PC-3 (cell line): ENCODE measurements at regions of chr3 and their contacts with region 1.

Region 1: GRCh38 chr3:8441969-8442559 is 59.6 kb upstream of the LMCD1 start:
- DNase-seq: peak; percentile 84
- ATAC-seq: peak; percentile 1; the same call in 1 of the 2 replicates
- H3K4me3 ChIP-seq: no peak overlapping the region
- H3K27ac ChIP-seq: no peak overlapping the region
- H3K4me1 ChIP-seq: peaks cover 46% of the 10 kb centered on the region
- H3K27me3 ChIP-seq: no peaks in the 10 kb centered on the region
- CTCF ChIP-seq: peak; percentile 90

Region 2: DNA sequence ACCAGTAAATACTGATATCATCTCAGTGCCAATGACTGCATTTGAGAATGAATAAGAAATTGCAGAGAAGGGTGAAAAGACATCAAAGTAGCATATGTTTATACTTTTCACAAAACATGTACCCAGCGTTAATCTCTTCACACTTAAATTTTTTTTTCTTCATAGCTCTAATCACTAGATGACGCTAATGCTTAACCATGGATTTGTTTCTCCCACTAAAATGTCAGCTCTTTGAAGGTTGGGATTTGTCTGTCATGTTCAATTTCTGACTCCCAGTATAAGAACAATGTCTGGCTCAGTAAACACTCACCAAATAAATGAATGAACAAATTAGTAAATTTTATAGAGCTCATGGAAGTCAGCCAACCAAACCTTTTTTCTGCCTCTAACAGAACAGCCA is 18.8 kb before region 1 on chr3:
- CTCF ChIA-PET with region 1: no interaction called
- POLR2A ChIA-PET with region 1: no interaction called
- intact Hi-C with region 1: no loop called
- DNase-seq: no peak
- ATAC-seq: no peak; the same call in 1 of the 2 replicates
- H3K4me3 ChIP-seq: no peak overlapping the region
- H3K27ac ChIP-seq: no peak overlapping the region
- H3K4me1 ChIP-seq: no peaks in the 10 kb centered on the region
- H3K27me3 ChIP-seq: no peaks in the 10 kb centered on the region
- CTCF ChIP-seq: no peak; the same call in 1 of the 2 replicates

Region 3: DNA sequence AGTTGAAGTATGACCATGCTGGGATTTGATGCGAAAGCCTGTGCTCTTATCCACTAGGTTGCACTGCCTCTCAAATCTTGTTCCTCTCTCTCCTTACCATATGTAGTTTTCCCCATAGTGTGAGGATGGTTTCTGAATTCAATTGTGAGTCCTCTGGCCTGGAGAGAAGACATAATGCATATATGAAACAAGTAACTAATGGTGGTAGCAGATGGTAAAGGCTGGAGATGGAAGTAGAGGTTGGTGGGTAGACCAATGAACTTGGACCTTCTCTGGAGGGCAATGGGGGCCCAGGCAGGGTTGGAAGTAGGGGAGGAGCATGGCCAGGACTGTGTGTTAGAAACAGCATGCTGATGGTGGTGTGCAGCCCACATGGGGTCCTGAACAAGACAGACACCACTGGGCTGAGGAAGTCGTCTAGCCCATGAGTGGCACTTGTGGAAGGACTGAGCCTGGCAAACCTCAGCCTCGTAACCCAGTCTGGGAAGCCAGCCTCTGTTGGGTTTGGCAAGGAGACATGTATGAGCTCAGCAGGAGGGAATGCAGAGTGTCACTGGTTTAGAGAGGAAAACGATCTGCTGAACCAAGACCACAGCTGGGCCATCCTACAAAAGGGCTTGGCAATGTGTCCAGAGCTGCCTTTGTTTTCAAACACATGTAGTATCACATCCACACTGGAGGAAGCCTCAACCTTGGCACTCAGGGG is 41.0 kb after region 1 on chr3:
- CTCF ChIA-PET with region 1: interaction called, 3 read pairs
- POLR2A ChIA-PET with region 1: interaction called, 5 read pairs
- intact Hi-C with region 1: loop called (anchors 1 kb)
- DNase-seq: peak; percentile 97
- ATAC-seq: peak; percentile 99
- H3K4me3 ChIP-seq: no peak overlapping the region
- H3K27ac ChIP-seq: 0 out of 2 replicates have a peak overlapping the region, but pooled peaks have one; percentile 4
- H3K4me1 ChIP-seq: peaks cover 13% of the 10 kb centered on the region
- H3K27me3 ChIP-seq: no peaks in the 10 kb centered on the region
- CTCF ChIP-seq: no peak

Region 4: DNA sequence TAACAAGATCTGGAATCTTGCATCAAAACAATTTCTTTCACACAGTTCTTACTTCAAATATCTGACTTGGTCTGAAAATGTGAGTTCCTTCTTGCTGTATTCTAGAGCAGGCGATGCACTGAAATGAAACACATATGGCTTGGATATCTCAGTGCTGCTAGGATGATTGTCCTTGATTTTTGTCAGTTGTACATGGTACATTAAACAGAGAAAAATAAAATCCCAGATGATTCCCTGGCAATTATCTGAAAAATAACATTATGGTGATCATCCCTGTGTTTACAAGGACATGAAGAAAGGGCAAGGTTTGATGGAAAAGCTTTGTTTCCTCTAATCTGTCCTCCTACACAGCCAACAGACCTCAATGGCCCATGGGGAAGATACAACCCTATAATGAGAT is 70.2 kb after region 1 on chr3:
- CTCF ChIA-PET with region 1: no interaction called
- POLR2A ChIA-PET with region 1: no interaction called
- intact Hi-C with region 1: no loop called
- DNase-seq: no peak
- ATAC-seq: no peak
- H3K4me3 ChIP-seq: no peak overlapping the region
- H3K27ac ChIP-seq: no peak overlapping the region
- H3K4me1 ChIP-seq: peaks cover 18% of the 10 kb centered on the region
- H3K27me3 ChIP-seq: no peaks in the 10 kb centered on the region
- CTCF ChIP-seq: no peak

Region 5: DNA sequence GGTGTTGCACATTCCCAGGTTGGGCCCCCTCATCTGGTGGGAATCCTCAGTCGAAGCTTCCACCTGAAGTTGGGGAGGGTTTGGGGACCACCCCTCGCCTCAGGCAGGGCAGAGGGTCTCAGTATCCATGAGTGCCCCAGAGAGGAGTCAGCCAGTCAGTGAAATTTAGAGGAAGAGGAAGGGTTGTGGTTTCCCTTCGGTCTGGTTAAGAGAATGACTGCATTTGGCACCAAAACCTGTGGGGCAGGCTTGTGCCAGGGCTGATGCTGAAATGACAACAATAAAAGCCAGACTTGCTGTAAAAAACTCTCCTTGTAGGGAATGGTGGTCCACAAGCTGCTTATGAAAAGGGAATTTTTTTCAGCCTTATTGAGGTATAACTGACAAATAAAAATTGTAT is 82.2 kb after region 1 on chr3:
- CTCF ChIA-PET with region 1: interaction called, 11 read pairs
- POLR2A ChIA-PET with region 1: no interaction called
- intact Hi-C with region 1: no loop called
- DNase-seq: peak; percentile 86
- ATAC-seq: peak; percentile 70
- H3K4me3 ChIP-seq: peak overlapping the region; percentile 46
- H3K27ac ChIP-seq: peak overlapping the region; percentile 90
- H3K4me1 ChIP-seq: peaks cover 42% of the 10 kb centered on the region
- H3K27me3 ChIP-seq: no peaks in the 10 kb centered on the region
- CTCF ChIP-seq: no peak

Region 6: GRCh38 chr3:8607234-8608040 is 165.4 kb after region 1 on chr3:
- CTCF ChIA-PET with region 1: interaction called, 11 read pairs
- POLR2A ChIA-PET with region 1: no interaction called
- intact Hi-C with region 1: loop called (anchors 1 kb)
- DNase-seq: peak; percentile 74
- ATAC-seq: peak; percentile 95
- H3K4me3 ChIP-seq: no peak overlapping the region
- H3K27ac ChIP-seq: no peak overlapping the region
- H3K4me1 ChIP-seq: 0 out of 2 replicates have a peak, but pooled peaks cover 6% of the 10 kb centered on the region
- H3K27me3 ChIP-seq: no peaks in the 10 kb centered on the region
- CTCF ChIP-seq: peak; percentile 80

Region 7: DNA sequence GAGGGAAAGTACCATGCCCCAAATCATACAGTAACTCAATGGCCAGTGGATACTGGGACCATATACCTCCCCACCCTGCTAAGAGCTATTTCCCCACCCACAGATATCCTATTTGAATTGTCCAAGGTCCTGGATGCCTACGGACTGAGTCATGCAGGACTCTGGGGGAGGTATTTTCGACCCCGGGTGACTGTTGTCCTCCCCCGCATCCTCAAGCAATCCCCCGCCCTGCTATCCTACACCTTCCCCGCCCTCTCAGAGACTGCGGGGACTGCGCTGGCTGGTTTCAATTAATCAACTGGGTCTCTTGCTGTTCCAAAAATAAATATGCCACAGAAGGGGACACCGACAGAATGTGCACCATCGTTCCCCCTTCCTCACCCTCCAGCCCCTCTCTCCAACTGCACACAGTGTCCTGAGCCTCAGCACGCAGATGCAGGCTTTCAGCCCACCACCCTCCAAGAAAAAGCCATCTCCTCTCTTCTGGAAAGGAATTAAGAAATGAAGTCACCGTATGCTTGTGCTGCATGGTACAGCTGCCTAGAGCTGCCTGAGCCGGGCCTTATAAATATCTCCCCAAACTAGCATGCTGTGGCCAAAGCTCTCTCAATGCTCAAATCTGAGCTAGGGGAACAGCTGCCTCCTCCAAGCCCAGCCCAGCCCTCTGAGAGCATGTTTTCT is 299.7 kb after region 1 on chr3:
- CTCF ChIA-PET with region 1: no interaction called
- POLR2A ChIA-PET with region 1: no interaction called
- intact Hi-C with region 1: loop called (anchors 1 kb)
- DNase-seq: peak; percentile 98
- ATAC-seq: peak; percentile 76
- H3K4me3 ChIP-seq: peak overlapping the region; percentile 45
- H3K27ac ChIP-seq: peak overlapping the region; percentile 91
- H3K4me1 ChIP-seq: peaks cover 51% of the 10 kb centered on the region
- H3K27me3 ChIP-seq: no peaks in the 10 kb centered on the region
- CTCF ChIP-seq: no peak